PC-9 (cell line): ENCODE measurements at regions of chr13 and their contacts with region 1.

Region 1: GRCh38 chr13:74452176-74452575 is 318.0 kb upstream of the KLF12 start:
- DNase-seq: no peak
- H3K4me3 ChIP-seq: no peak overlapping the region
- H3K27ac ChIP-seq: no peak overlapping the region
- H3K4me1 ChIP-seq: no peaks in the 10 kb centered on the region
- H3K27me3 ChIP-seq: no peaks in the 10 kb centered on the region
- CTCF ChIP-seq: no peak

Region 2: DNA sequence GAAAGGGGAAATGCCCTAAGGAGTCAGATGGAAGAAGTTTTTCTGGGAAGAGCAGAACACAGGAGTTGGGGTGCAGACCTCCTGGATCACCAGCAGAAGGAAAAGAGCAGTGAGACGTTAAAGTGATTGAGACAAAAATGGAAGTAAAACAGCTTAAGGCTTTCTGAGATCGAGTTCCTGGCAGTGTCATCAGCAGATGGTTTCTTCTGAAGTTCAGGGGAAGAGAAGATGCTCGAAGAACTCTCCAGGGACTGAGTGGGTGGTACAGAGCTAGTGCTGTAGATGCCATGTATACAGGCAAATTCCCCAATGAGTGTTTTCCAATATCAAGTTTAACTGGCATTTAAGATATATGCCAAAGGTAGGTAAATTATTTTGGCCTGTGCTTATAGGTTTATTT is 45.8 kb before region 1 on chr13:
- CTCF ChIA-PET with region 1: no interaction called
- POLR2A ChIA-PET with region 1: no interaction called
- intact Hi-C with region 1: no loop called
- DNase-seq: no peak
- H3K4me3 ChIP-seq: no peak overlapping the region
- H3K27ac ChIP-seq: no peak overlapping the region
- H3K4me1 ChIP-seq: no peaks in the 10 kb centered on the region
- H3K27me3 ChIP-seq: no peaks in the 10 kb centered on the region
- CTCF ChIP-seq: no peak

Region 3: DNA sequence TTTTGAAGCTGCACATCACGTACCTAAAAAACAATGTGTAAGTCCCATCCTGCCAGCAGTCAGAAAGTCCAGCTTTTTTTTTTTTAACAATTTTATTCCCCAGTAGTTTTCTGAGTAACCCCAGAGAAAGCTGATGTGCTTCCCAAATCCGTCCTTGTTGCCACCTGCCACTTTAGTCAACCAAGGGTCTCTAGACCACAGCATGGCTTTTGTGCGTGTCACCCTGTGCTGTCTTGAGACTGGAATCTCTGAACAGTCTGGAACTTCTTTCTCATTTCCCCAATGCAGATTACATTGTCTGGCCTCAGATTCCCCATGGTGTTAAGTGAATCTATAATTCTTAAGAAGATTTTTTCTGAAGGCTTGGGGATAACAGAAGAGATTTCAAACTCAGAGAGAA is 28.7 kb before region 1 on chr13:
- CTCF ChIA-PET with region 1: interaction called, 15 read pairs
- POLR2A ChIA-PET with region 1: no interaction called
- intact Hi-C with region 1: no loop called
- DNase-seq: no peak
- H3K4me3 ChIP-seq: no peak overlapping the region
- H3K27ac ChIP-seq: no peak overlapping the region
- H3K4me1 ChIP-seq: no peaks in the 10 kb centered on the region
- H3K27me3 ChIP-seq: no peaks in the 10 kb centered on the region
- CTCF ChIP-seq: no peak

Region 4: GRCh38 chr13:74710006-74710405 is 257.8 kb after region 1 on chr13:
- CTCF ChIA-PET with region 1: no interaction called
- POLR2A ChIA-PET with region 1: no interaction called
- intact Hi-C with region 1: no loop called
- DNase-seq: no peak
- H3K4me3 ChIP-seq: no peak overlapping the region
- H3K27ac ChIP-seq: no peak overlapping the region
- H3K4me1 ChIP-seq: no peaks in the 10 kb centered on the region
- H3K27me3 ChIP-seq: no peaks in the 10 kb centered on the region
- CTCF ChIP-seq: no peak

Region 5: GRCh38 chr13:75285310-75285709 is 833.1 kb after region 1 on chr13:
- CTCF ChIA-PET with region 1: no interaction called
- POLR2A ChIA-PET with region 1: no interaction called
- intact Hi-C with region 1: no loop called
- DNase-seq: no peak
- H3K4me3 ChIP-seq: no peak overlapping the region
- H3K27ac ChIP-seq: no peak overlapping the region
- H3K4me1 ChIP-seq: no peaks in the 10 kb centered on the region
- H3K27me3 ChIP-seq: no peaks in the 10 kb centered on the region
- CTCF ChIP-seq: no peak